PC-3 (cell line): ENCODE measurements at regions of chr1 and their contacts with region 1.

Region 1: GRCh38 chr1:23098463-23099170 is 70.0 kb downstream of the LUZP1 start:
- DNase-seq: peak; percentile 79
- ATAC-seq: 0 out of 2 replicates have a peak, but pooled peaks have one; percentile 1
- H3K4me3 ChIP-seq: no peak overlapping the region
- H3K27ac ChIP-seq: peak overlapping the region; percentile 11; the same call in 1 of the 2 replicates
- H3K4me1 ChIP-seq: peaks cover 60% of the 10 kb centered on the region
- H3K27me3 ChIP-seq: no peaks in the 10 kb centered on the region
- CTCF ChIP-seq: peak; percentile 90

Region 2: GRCh38 chr1:22870201-22870871 is 228.3 kb before region 1 on chr1:
- CTCF ChIA-PET with region 1: no interaction called
- POLR2A ChIA-PET with region 1: no interaction called
- intact Hi-C with region 1: no loop called
- DNase-seq: peak; percentile 53
- ATAC-seq: peak; percentile 86
- H3K4me3 ChIP-seq: no peak overlapping the region
- H3K27ac ChIP-seq: no peak overlapping the region
- H3K4me1 ChIP-seq: peaks cover 16% of the 10 kb centered on the region
- H3K27me3 ChIP-seq: no peaks in the 10 kb centered on the region
- CTCF ChIP-seq: no peak

Region 3: DNA sequence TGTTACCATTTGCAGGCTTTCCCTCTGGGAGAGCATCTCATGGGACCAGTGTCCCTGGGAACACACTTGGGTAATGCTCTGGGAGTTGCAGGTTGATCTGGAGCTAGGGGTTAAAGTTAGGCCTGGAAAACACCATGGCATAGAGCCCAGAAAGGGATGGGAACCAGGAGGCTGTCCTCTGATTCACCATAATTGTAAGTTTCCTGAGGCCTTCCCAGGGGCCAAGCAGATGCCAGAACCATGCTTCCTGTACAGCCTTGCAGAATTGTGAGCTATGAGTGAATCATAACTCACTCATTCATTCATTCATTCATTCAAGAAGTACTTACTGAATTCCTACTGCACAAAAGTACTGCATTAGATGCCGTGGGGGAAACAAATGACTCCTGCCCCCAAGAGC is 176.0 kb before region 1 on chr1:
- CTCF ChIA-PET with region 1: no interaction called
- POLR2A ChIA-PET with region 1: no interaction called
- intact Hi-C with region 1: no loop called
- DNase-seq: no peak
- ATAC-seq: no peak
- H3K4me3 ChIP-seq: no peak overlapping the region
- H3K27ac ChIP-seq: no peak overlapping the region
- H3K4me1 ChIP-seq: no peaks in the 10 kb centered on the region
- H3K27me3 ChIP-seq: no peaks in the 10 kb centered on the region
- CTCF ChIP-seq: no peak

Region 4: GRCh38 chr1:22976461-22977243 is 122.0 kb before region 1 on chr1:
- CTCF ChIA-PET with region 1: no interaction called
- POLR2A ChIA-PET with region 1: no interaction called
- intact Hi-C with region 1: loop called (anchors 1 kb)
- DNase-seq: peak; percentile 89
- ATAC-seq: peak; percentile 90
- H3K4me3 ChIP-seq: peak overlapping the region; percentile 43
- H3K27ac ChIP-seq: peak overlapping the region; percentile 3; the same call in 1 of the 2 replicates
- H3K4me1 ChIP-seq: peaks cover 21% of the 10 kb centered on the region
- H3K27me3 ChIP-seq: no peaks in the 10 kb centered on the region
- CTCF ChIP-seq: peak; percentile 95

Region 5: GRCh38 chr1:23013657-23014056 is 85.0 kb before region 1 on chr1:
- CTCF ChIA-PET with region 1: no interaction called
- POLR2A ChIA-PET with region 1: interaction called, 11 read pairs
- intact Hi-C with region 1: no loop called
- DNase-seq: peak; percentile 26
- ATAC-seq: no peak
- H3K4me3 ChIP-seq: no peak overlapping the region
- H3K27ac ChIP-seq: no peak overlapping the region
- H3K4me1 ChIP-seq: peaks cover 28% of the 10 kb centered on the region
- H3K27me3 ChIP-seq: no peaks in the 10 kb centered on the region
- CTCF ChIP-seq: no peak

Region 6: GRCh38 chr1:23168457-23169194 is 70.0 kb after region 1 on chr1 and contains the start of gene LUZP1:
- CTCF ChIA-PET with region 1: interaction called, 3 read pairs
- POLR2A ChIA-PET with region 1: interaction called, 7 read pairs
- intact Hi-C with region 1: loop called (anchors 5 kb)
- DNase-seq: peak; percentile 82
- ATAC-seq: peak; percentile 74
- H3K4me3 ChIP-seq: peak within 1 kb of the TSS; percentile 98
- H3K27ac ChIP-seq: peak within 1 kb of the TSS; percentile 61
- H3K4me1 ChIP-seq: peaks cover 12% of the 10 kb centered on the region; the same call in 1 of the 2 replicates
- H3K27me3 ChIP-seq: no peaks in the 10 kb centered on the region
- CTCF ChIP-seq: no peak
- total RNA-seq, gene LUZP1: 17.5 and 17.8 TPM in 2 replicates

Region 7: DNA sequence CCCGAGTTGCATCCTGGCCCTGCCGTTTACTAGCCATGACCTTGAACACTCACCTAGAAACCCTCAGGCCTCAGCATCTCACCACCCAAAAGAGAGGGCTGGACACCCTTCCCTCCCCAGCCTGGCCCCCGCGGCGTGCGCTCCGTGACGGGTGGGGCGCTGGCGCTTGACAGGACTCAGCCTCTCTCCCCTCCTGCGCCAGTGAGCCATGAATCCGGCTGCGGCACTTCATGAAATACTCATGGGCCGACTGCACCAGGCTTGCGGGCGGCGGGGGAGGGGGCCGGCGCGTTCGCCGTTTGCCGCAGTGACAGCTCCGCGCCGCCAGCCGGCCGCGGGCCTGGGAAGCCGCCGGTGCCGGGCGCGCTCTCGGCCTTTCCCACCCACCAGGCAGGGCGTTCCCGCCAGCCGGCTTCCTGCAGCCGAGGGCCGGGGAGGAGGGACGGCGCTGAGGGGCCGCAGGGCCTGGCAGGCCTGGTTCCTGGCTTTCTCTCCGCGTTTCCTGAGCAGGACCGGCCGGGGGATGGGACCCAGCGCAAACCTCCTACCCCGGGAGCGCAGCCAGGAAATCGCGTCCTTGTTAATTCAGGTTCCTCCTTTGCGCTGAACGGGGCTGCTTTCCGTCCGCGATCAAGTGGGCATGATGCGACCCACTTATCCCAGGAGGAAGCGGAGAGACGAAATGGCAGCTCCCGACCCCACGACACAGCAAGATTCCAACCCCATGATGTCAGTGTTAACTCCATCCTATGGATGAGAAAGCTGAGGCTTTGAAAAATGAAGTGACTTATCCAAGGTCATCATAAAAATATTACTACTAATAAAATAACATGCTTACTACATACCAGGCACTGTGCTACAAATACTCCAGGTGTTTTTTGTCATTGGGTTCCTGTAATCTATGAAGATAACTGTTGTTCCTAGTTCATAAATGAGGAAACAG is 79.1 kb after region 1 on chr1:
- CTCF ChIA-PET with region 1: interaction called, 19 read pairs
- POLR2A ChIA-PET with region 1: interaction called, 3 read pairs
- intact Hi-C with region 1: no loop called
- DNase-seq: peak; percentile 67
- ATAC-seq: peak; percentile 81
- H3K4me3 ChIP-seq: peak overlapping the region; percentile 61
- H3K27ac ChIP-seq: no peak overlapping the region; the same call in 1 of the 2 replicates
- H3K4me1 ChIP-seq: peaks cover 5% of the 10 kb centered on the region; the same call in 1 of the 2 replicates
- H3K27me3 ChIP-seq: no peaks in the 10 kb centered on the region
- CTCF ChIP-seq: no peak

Region 8: DNA sequence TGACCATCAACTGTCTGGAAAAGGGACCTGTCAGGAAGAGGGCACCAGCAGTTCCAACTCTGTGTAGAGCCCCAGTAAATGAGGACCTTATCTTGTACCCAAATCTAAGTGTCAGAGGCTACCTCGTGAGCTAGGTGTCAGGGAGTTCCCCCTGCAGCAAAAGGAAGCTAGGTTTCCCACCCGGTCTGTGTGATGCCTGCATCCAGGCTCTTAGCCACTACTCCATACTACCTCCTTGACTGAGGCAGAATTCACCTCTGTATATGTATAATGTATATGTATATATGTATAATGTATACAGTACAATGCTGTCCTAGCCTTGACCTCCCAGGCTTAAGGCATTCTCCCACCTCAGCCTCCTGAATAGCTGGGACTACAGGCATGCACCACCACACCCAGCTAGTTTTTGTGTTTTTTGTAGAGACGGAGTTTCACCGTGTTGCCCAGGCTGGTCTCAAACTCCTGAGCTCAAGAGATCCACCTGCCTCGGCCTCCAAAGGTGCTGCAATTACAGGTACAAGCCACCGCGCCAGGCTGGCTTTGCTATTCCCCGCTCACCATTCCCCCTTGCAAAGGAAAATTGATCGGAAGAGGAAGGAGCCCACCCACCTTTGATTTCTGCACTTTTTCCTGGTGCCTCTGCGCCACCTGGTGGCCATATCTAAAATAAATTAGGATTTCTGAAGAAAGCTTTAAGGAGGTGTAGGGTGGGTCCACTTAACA is 85.8 kb after region 1 on chr1:
- CTCF ChIA-PET with region 1: interaction called, 30 read pairs
- POLR2A ChIA-PET with region 1: interaction called, 4 read pairs
- intact Hi-C with region 1: loop called (anchors 1 kb)
- DNase-seq: peak; percentile 64
- ATAC-seq: peak; percentile 14; the same call in 1 of the 2 replicates
- H3K4me3 ChIP-seq: 0 out of 2 replicates have a peak overlapping the region, but pooled peaks have one; percentile 41
- H3K27ac ChIP-seq: no peak overlapping the region
- H3K4me1 ChIP-seq: peaks cover 23% of the 10 kb centered on the region
- H3K27me3 ChIP-seq: no peaks in the 10 kb centered on the region
- CTCF ChIP-seq: peak; percentile 86

Region 9: GRCh38 chr1:23242414-23242813 is 143.8 kb after region 1 on chr1:
- CTCF ChIA-PET with region 1: no interaction called
- POLR2A ChIA-PET with region 1: no interaction called
- intact Hi-C with region 1: no loop called
- DNase-seq: no peak
- ATAC-seq: no peak
- H3K4me3 ChIP-seq: no peak overlapping the region
- H3K27ac ChIP-seq: no peak overlapping the region
- H3K4me1 ChIP-seq: 0 out of 2 replicates have a peak, but pooled peaks cover 3% of the 10 kb centered on the region
- H3K27me3 ChIP-seq: no peaks in the 10 kb centered on the region
- CTCF ChIP-seq: no peak

Region 10: DNA sequence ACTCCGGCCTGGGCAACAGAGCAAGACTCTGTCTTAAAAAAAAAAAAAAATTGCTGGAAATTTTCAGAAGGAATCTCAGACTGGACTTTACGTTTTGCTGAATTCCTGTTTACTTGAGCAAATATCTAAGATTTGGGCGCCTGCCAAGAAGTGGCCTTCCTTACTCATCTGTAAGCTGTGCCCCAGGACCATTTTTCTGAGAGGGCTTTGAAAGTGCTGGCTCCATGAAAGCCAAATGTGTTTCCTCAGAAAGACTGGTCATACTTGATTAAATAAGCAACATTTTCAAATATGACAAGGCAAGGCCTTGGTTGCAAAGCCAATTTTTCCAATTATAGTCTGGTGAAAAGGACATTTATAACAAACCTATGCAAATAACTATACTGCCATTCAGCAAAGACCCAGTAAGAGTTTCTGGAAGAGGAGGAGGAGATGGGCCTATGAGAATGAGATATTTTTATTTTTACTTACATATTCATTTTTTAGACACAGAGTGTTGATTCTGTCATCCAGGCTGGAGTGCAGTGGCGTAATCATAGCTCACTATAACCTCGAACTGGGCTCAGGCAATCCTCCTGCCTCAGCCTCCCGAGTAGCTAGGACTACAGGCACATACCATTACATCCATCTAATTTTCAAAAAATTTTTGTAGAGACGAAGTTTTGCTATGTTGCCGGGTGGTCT is 175.0 kb after region 1 on chr1:
- CTCF ChIA-PET with region 1: no interaction called
- POLR2A ChIA-PET with region 1: no interaction called
- intact Hi-C with region 1: loop called (anchors 1 kb)
- DNase-seq: peak; percentile 94
- ATAC-seq: peak; percentile 80
- H3K4me3 ChIP-seq: no peak overlapping the region
- H3K27ac ChIP-seq: peak overlapping the region; percentile 48
- H3K4me1 ChIP-seq: peaks cover 32% of the 10 kb centered on the region
- H3K27me3 ChIP-seq: no peaks in the 10 kb centered on the region
- CTCF ChIP-seq: no peak